GM12878 (cell line): ENCODE measurements at regions of chr19 and their contacts with region 1.

Region 1: DNA sequence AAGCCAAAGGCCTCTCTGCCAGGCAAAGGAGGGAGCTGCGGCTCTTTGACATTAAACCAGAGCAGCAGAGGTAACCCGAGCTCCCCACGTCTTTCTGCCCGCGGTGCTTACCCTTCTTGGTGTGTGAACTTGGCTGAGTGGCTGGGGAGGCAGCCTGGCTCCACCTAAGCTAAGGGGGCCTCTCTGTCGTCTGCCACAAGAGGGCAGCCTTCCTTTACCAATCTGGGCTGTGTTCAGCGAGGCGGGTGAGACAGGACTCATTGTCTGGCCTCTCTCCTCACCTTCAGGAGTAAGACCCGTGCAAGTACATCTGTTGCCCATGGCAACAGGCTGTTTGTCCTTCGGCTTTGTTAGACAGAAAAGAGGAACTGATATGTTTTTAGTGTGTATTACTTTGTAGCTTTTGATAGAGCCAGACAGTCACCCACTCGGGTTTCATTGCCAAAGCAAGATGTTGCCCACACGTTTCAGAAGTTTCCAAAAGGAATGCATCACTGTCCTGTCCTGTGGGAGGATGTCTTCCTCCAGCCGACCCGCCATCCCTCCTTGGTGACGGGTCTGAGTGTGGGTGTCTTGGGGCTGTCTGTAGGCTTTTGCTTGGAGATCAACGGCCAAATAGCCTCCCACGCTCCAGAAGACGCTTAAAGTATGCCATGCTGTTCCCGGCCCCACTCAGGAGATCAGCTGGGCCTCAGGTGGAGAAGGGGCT is 4.6 kb downstream of the POP4 start:
- DNase-seq: peak; percentile 75
- ATAC-seq: peak; percentile 94
- H3K4me3 ChIP-seq: no peak overlapping the region
- H3K27ac ChIP-seq: no peak overlapping the region; the same call in 1 of the 2 replicates
- H3K4me1 ChIP-seq: peaks cover 17% of the 10 kb centered on the region
- H3K27me3 ChIP-seq: no peaks in the 10 kb centered on the region
- CTCF ChIP-seq: peak; percentile 87 to 98 (median 92); a peak in 5 of 6 replicates
- EP300 ChIP-seq: peak in 1 of 2 experiments; percentile 51; a peak in 1 of 4 replicates
- POLR2A ChIP-seq: no peak
- RAD21 ChIP-seq: peak; percentile 89

Region 2: DNA sequence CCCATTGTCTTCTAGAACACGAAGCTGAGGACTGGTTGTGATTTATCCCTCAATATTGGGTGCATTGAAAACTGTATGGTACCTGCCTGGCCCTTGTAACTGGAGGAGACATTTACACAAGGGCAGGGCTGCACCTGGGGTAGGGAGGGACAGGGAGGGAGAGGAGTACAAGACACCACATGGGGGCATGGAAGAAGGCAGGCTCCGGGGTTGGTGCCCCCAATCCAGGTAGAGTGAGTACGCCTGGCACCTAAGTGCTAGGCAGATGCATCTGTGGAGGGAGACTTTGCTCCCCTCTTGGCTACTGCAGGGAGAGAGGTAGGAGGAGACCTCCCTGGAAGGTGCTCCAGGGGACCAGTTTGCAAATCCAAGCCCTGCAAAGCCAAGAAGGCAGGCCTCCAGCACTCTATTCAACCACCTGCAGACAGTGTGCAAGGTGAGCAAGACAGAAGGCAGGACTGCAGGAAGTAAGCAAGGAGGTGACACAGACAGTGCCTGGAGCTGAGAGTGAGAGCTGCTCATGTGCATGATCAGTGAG is 378.3 kb before region 1 on chr19:
- CTCF ChIA-PET with region 1: no interaction called
- POLR2A ChIA-PET with region 1: no interaction called
- RAD21 ChIA-PET with region 1: no interaction called
- SMC1A ChIA-PET with region 1: no interaction called
- in situ Hi-C with region 1: no loop called
- intact Hi-C with region 1: no loop called
- DNase-seq: no peak
- ATAC-seq: no peak
- H3K4me3 ChIP-seq: no peak overlapping the region
- H3K27ac ChIP-seq: no peak overlapping the region
- H3K4me1 ChIP-seq: no peaks in the 10 kb centered on the region
- H3K27me3 ChIP-seq: no peaks in the 10 kb centered on the region
- CTCF ChIP-seq: no peak
- EP300 ChIP-seq: no peak
- POLR2A ChIP-seq: no peak
- RAD21 ChIP-seq: no peak

Region 3: DNA sequence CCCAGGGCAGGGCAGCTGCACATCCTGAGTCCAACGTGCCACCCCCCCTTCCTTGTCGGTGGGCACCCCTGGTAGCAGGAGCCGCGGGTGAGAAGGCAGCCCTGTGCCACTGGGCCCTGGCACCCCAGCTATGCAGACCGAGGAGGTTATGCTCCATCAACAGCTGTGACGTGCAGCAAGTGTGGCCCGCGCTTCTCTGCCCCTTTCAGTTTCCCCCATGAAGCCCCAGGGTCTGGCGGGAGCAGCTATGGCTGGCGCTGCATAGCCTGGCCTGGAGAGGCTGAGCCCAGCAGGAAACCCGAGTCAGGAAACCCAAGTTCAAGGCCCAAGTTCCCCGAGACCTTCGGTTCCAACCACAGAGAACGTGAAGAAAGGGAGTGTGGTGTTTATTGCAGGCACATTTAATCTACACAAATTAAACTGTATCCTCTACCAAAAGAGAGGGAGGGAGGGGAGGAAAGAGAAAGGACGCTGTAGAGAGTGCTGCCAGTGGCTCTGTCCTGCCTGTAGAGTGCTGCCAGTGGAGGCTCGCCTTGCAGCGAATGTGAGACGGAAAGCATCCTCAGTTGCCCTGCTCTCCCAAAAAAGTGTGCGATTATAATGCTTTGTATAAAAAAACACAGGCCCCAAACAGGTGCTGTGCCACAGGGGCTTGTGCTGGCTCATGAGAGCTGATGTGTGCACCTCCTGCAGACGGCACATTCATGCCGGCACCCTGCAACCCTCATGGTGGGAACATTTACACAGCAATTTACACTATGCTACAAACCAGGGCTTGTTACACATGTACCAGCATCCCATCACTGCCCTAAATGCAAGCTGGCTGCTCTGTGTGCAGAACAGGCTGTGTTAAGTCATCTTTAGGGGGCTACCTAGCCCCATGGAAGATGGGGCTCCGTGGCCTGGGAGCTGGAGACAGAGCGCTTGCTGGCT is 11.7 kb after region 1 on chr19:
- CTCF ChIA-PET with region 1: interaction called, 35 read pairs
- POLR2A ChIA-PET with region 1: interaction called, 4 read pairs
- RAD21 ChIA-PET with region 1: interaction called, 4 read pairs
- SMC1A ChIA-PET with region 1: interaction called, 7 read pairs
- in situ Hi-C with region 1: no loop called
- intact Hi-C with region 1: no loop called
- DNase-seq: no peak
- ATAC-seq: peak; percentile 54
- H3K4me3 ChIP-seq: no peak overlapping the region
- H3K27ac ChIP-seq: no peak overlapping the region
- H3K4me1 ChIP-seq: peaks cover 17% of the 10 kb centered on the region
- H3K27me3 ChIP-seq: no peaks in the 10 kb centered on the region
- CTCF ChIP-seq: no peak
- EP300 ChIP-seq: no peak
- POLR2A ChIP-seq: no peak
- RAD21 ChIP-seq: no peak

Region 4: GRCh38 chr19:29671393-29672160 is 60.9 kb after region 1 on chr19:
- CTCF ChIA-PET with region 1: interaction called, 87 read pairs
- POLR2A ChIA-PET with region 1: interaction called, 7 read pairs
- RAD21 ChIA-PET with region 1: interaction called, 37 read pairs
- SMC1A ChIA-PET with region 1: interaction called, 42 read pairs
- in situ Hi-C with region 1: loop called (anchors 10 kb)
- intact Hi-C with region 1: no loop called
- DNase-seq: peak; percentile 88
- ATAC-seq: peak; percentile 85
- H3K4me3 ChIP-seq: peak overlapping the region; percentile 59
- H3K27ac ChIP-seq: peak overlapping the region; percentile 89
- H3K4me1 ChIP-seq: peaks cover 65% of the 10 kb centered on the region
- H3K27me3 ChIP-seq: no peaks in the 10 kb centered on the region
- CTCF ChIP-seq: peak; percentile 31 to 68 (median 65); a peak in 5 of 6 replicates
- EP300 ChIP-seq: peak in 1 of 2 experiments; percentile 39; a peak in 1 of 4 replicates
- POLR2A ChIP-seq: 0 out of 2 replicates have a peak, but pooled peaks have one; percentile 38
- RAD21 ChIP-seq: no peak

Region 5: DNA sequence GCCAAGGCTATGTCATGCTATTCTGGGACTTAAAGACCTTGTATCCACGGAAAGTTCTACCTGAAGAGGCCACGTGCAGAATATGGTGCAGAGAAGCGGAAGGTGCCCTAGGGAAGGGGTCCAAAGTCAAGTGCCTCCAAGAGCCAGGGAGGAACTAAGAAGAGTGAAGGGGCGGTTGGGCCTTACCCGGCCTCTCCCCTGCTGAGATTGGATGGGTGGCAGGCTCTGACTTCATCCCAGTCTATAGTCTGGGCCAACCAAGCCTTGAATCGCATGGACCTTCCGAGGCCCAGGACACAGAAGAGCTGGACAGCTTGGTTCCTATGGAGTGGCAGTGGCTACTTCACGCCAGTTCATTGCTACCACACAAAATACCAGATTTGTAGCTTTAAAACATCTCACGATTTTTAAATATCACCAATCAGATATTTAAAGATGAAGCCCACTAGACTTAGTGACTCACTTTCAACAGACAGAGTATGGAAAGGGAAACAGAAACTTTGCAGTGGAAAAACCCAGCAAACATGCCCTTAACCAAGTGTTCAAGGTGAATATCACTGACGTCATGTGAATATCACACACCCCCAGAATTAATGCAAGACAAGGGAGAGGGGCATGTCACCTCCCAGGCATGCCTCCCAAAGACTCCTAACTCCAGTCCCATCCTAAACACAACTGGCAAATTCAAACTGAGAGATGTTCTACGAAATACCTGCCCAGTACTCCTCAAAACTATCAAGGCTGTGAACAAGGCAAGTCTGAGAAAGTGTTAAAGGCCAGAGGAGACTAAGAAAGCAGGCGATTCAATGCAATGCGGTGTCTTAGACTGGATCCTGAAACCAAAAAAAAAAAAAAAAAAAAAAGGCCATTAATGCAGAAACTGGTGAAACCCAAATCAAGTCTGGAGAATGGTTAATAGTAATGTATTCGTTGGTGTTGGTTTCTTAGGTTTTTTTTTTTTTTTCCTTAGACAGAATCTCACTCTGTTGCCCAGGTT is 94.1 kb after region 1 on chr19:
- CTCF ChIA-PET with region 1: interaction called, 237 read pairs
- POLR2A ChIA-PET with region 1: interaction called, 6 read pairs
- RAD21 ChIA-PET with region 1: interaction called, 4 read pairs
- SMC1A ChIA-PET with region 1: interaction called, 4 read pairs
- in situ Hi-C with region 1: loop called (anchors 10 kb)
- intact Hi-C with region 1: no loop called
- DNase-seq: peak; percentile 42
- ATAC-seq: peak; percentile 92
- H3K4me3 ChIP-seq: no peak overlapping the region
- H3K27ac ChIP-seq: peak overlapping the region; percentile 79
- H3K4me1 ChIP-seq: peaks cover 17% of the 10 kb centered on the region
- H3K27me3 ChIP-seq: no peaks in the 10 kb centered on the region
- CTCF ChIP-seq: no peak
- EP300 ChIP-seq: no peak
- POLR2A ChIP-seq: no peak
- RAD21 ChIP-seq: no peak

Region 6: DNA sequence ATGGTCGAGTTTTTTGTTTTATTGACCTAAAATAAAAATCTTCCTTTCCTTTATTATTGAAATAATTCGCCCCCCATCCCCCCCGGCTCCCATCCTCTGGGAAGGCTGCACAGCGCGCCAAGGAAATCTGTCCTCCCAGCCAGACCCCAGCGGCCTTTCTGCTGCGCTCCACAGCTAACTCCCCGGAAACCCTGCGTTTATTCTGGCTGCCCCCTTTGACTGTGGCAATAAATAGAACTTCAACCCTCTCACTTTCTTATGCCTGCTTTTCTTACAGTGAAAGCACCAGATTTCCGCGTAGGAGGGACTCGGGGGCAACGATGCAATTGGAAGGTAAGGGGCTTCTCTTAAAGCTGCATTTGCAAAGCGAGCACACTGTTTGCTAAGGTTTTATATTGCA is 114.0 kb after region 1 on chr19:
- CTCF ChIA-PET with region 1: interaction called, 11 read pairs
- POLR2A ChIA-PET with region 1: interaction called, 6 read pairs
- RAD21 ChIA-PET with region 1: no interaction called
- SMC1A ChIA-PET with region 1: no interaction called
- in situ Hi-C with region 1: loop called (anchors 10 kb)
- intact Hi-C with region 1: no loop called
- DNase-seq: no peak
- ATAC-seq: no peak
- H3K4me3 ChIP-seq: no peak overlapping the region
- H3K27ac ChIP-seq: no peak overlapping the region
- H3K4me1 ChIP-seq: no peaks in the 10 kb centered on the region
- H3K27me3 ChIP-seq: peaks cover 0 to 2% of the 10 kb centered on the region in 2 experiments; a peak in 2 of 4 replicates
- CTCF ChIP-seq: no peak
- EP300 ChIP-seq: no peak
- POLR2A ChIP-seq: no peak
- RAD21 ChIP-seq: no peak